ENCODE measurements at regions of chr15 and their contacts with region 1.

Region 1: DNA sequence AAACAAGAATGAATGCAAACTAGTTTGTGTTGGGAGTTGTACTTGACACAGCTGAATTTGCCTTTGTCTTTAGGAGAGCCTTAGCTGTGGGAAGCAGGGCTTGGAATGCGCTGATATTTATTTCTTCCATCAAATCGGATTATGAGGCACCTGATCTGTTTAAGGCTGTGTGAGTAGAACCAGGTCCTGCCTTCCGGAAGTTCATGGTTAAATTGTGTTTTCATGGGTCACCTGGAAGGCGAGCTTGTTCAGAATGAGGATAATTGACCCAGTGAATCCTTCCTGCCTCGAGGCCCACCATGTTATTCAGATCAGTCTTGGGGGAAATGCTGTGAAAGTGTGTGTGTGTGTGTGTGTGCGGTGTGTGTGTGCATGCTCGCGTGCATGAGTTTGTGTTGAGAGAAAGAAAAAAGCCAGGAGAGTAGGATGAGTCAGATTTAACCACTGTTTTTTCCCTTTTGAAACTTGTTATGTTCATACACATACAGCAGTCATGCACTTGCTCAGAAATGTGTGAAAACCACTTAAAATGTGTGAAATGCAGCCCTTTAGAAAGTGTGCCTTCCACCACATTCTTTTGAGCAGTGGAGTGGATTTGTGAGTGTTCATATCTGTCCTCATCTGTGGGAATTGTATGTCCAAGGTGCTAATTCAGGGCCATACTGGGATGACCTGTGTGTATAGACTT is 36.7 kb downstream of the SMAD3 start:
- DNase-seq: peak; percentile 63
- ATAC-seq: peak; percentile 66
- H3K4me3 Mint-ChIP-seq: no peak overlapping the region
- H3K27ac Mint-ChIP-seq: no peak overlapping the region
- H3K4me1 Mint-ChIP-seq: peaks cover 29% of the 10 kb centered on the region
- H3K27me3 Mint-ChIP-seq: no peaks in the 10 kb centered on the region

Region 2: DNA sequence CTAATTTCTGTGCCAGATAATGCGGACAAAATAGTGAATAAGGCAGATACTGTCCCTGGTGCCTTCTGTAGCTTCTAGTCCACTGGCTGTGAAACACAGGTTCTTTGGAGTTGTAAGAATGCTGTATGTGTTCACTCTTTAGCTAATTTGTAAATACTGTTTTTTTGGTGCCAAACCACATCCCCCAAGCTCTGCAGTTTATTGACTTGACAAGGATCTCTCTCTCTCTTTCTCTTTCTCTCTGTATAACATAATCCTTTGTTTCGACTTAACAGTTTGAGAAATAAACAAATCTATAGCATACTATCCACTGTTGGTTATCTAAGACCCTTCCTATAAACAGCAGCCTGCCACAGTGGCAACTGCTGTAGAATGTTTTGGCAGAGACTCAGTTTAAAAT is 29.1 kb before region 1 on chr15:
- CTCF ChIA-PET with region 1: interaction called, 6 read pairs
- POLR2A ChIA-PET with region 1: interaction called, 74 read pairs
- DNase-seq: no peak
- ATAC-seq: peak; percentile 21
- H3K4me3 Mint-ChIP-seq: peak overlapping the region; percentile 13
- H3K27ac Mint-ChIP-seq: peak overlapping the region; percentile 55
- H3K4me1 Mint-ChIP-seq: peaks cover 94% of the 10 kb centered on the region
- H3K27me3 Mint-ChIP-seq: no peaks in the 10 kb centered on the region

Region 3: DNA sequence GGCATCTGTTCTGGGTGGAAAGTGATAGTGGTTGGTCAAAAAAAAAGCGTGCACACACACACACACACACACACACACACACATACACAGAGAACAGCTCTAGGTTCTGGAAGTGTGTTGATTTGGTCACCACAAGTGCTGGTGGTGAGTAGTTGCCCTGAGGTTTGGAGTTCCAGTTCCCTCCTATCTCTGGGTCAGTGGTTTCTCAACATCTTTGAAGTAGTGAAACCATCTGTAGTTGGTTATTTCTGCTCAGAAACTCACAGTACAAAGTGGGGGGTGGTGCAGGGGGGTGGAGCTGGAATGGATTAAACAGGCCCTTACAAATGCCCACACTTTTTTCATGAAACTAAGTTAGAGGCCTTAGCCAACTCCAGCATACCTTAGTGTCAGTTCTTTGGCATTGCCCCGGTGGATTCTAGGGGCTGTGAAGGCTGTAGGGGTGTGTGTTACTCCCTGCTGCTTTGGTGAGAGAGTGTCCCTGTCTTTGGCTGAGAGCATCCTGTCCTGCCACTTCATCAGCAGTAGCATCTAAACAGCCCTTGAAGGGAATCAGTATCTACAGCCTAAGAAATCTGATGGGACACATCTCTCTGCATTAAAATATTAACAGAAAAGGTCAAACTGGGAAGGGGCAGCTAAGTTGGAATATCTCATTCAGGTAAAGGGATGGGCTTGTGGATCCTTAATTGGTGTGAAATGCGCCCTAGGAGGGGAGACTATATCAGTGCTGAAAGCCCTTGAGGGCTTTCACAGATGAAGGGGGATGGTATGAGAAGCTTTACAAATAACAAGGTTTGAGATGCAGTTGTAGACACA is 16.0 kb before region 1 on chr15:
- CTCF ChIA-PET with region 1: interaction called, 15 read pairs
- POLR2A ChIA-PET with region 1: interaction called, 38 read pairs
- DNase-seq: peak; percentile 58
- ATAC-seq: peak; percentile 59
- H3K4me3 Mint-ChIP-seq: peak overlapping the region; percentile 49
- H3K27ac Mint-ChIP-seq: peak overlapping the region; percentile 74
- H3K4me1 Mint-ChIP-seq: peaks cover 98% of the 10 kb centered on the region
- H3K27me3 Mint-ChIP-seq: peaks cover 2% of the 10 kb centered on the region

Region 4: GRCh38 chr15:67120839-67121643 is 19.0 kb after region 1 on chr15:
- CTCF ChIA-PET with region 1: interaction called, 24 read pairs
- POLR2A ChIA-PET with region 1: interaction called, 26 read pairs
- DNase-seq: peak; percentile 82
- ATAC-seq: peak; percentile 93
- H3K4me3 Mint-ChIP-seq: peak overlapping the region; percentile 58
- H3K27ac Mint-ChIP-seq: peak overlapping the region; percentile 95
- H3K4me1 Mint-ChIP-seq: peaks cover 85% of the 10 kb centered on the region
- H3K27me3 Mint-ChIP-seq: no peaks in the 10 kb centered on the region

Measured in activated CD8-positive, alpha-beta T cell treated with anti-CD3 and anti-CD28 coated beads, Interleukin-2, amount 10 ng/mL, durations not matched to agents 7 days and 5 days (primary cell).